WTC11 (cell line): ENCODE measurements at regions of chr15 and their contacts with region 1.

Region 1: DNA sequence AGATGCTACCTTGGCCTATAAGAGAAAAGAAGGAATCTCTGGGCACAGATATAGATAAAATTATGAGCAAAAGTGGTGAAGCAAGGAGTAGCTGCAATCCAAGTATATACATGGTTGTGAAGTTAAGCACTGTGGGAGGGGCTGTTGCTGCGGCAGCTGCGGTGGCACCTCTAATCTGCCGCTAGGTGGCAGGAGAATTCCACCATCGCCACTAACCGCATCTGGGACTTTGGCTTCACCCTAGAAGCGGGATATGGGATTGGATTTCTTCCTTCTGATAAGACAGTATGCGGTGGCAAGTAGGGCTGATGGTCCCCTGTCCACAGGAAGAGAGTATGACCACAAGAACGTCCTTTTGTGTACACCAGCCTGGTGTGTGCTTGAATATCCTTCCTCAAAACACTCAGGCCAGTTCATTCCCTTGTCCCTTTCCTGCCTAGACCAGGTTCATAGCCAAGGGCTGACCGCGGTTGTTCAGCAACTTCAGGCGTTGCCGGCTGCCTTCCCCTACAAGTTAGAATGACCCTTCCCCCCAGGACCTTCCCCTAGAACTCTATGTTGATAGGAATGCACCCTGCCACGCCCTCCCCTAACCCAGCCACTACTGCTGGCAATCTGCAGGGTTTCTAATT is 5.1 kb downstream of the MAGEL2 start:
- DNase-seq: peak; percentile 69
- ATAC-seq: peak; percentile 77
- H3K4me3 Mint-ChIP-seq: peak overlapping the region; percentile 38
- H3K27ac Mint-ChIP-seq: no peak overlapping the region
- H3K4me1 Mint-ChIP-seq: peaks cover 6% of the 10 kb centered on the region; the same call in 1 of the 2 replicates
- H3K27me3 Mint-ChIP-seq: peaks cover 11% of the 10 kb centered on the region
- CTCF ChIP-seq: peak; percentile 76

Region 2: GRCh38 chr15:23762026-23762425 is 119.5 kb after region 1 on chr15:
- CTCF ChIA-PET with region 1: no interaction called
- POLR2A ChIA-PET with region 1: no interaction called
- DNase-seq: no peak
- ATAC-seq: no peak
- H3K4me3 Mint-ChIP-seq: no peak overlapping the region
- H3K27ac Mint-ChIP-seq: no peak overlapping the region
- H3K4me1 Mint-ChIP-seq: peaks cover 17% of the 10 kb centered on the region
- H3K27me3 Mint-ChIP-seq: peaks cover 10% of the 10 kb centered on the region
- CTCF ChIP-seq: no peak

Region 3: DNA sequence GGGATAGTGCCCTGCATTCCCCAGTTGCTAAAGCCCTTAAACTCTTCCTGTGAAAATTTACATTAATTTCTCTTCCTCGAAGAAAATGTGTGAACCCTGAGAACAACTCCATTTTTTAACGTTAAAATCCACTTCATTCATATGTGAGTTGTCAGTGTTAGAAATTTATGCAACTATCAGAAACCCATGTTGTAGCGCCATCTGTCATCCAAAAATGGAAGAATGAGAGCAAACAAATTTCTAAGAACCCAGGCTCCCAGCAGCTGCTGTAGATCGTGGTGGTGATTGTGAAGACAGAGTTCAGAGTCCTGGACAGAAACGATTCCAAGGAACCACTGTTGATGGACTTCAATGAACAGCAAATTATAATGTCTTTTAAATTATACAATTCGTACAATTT is 224.3 kb after region 1 on chr15:
- CTCF ChIA-PET with region 1: interaction called, 10 read pairs
- POLR2A ChIA-PET with region 1: no interaction called
- DNase-seq: no peak
- ATAC-seq: no peak
- H3K4me3 Mint-ChIP-seq: no peak overlapping the region
- H3K27ac Mint-ChIP-seq: no peak overlapping the region
- H3K4me1 Mint-ChIP-seq: peaks cover 11% of the 10 kb centered on the region; the same call in 1 of the 2 replicates
- H3K27me3 Mint-ChIP-seq: no peaks in the 10 kb centered on the region; the same call in 1 of the 2 replicates
- CTCF ChIP-seq: no peak